ENCODE measurements at regions of chr3 and their contacts with region 1.

Region 1: GRCh38 chr3:179604321-179605078 is at the starts of genes MRPL47 and NDUFB5:
- DNase-seq: peak; percentile 96
- ATAC-seq: peak; percentile 95
- H3K4me3 Mint-ChIP-seq: peak within 1 kb of the TSS; percentile 99
- H3K27ac Mint-ChIP-seq: peak within 1 kb of the TSS; percentile 99
- H3K4me1 Mint-ChIP-seq: peaks cover 46% of the 10 kb centered on the region
- H3K27me3 Mint-ChIP-seq: no peaks in the 10 kb centered on the region
- total RNA-seq, gene MRPL47: 36.8 to 39.9 TPM
- total RNA-seq, gene NDUFB5: 87.1 to 95.9 TPM

Region 2: GRCh38 chr3:179503626-179504025 is 100.9 kb before region 1 on chr3:
- CTCF ChIA-PET with region 1: no interaction called
- POLR2A ChIA-PET with region 1: no interaction called
- DNase-seq: no peak
- ATAC-seq: no peak
- H3K4me3 Mint-ChIP-seq: no peak overlapping the region
- H3K27ac Mint-ChIP-seq: no peak overlapping the region
- H3K4me1 Mint-ChIP-seq: no peaks in the 10 kb centered on the region
- H3K27me3 Mint-ChIP-seq: peaks cover 13% of the 10 kb centered on the region

Region 3: GRCh38 chr3:179589143-179589542 is 15.4 kb before region 1 on chr3:
- CTCF ChIA-PET with region 1: no interaction called
- POLR2A ChIA-PET with region 1: no interaction called
- DNase-seq: no peak
- ATAC-seq: no peak
- H3K4me3 Mint-ChIP-seq: no peak overlapping the region
- H3K27ac Mint-ChIP-seq: no peak overlapping the region
- H3K4me1 Mint-ChIP-seq: no peaks in the 10 kb centered on the region
- H3K27me3 Mint-ChIP-seq: no peaks in the 10 kb centered on the region

Region 4: GRCh38 chr3:179653096-179653797 is 48.7 kb after region 1 on chr3:
- CTCF ChIA-PET with region 1: interaction called, 7 read pairs
- POLR2A ChIA-PET with region 1: interaction called, 16 read pairs
- DNase-seq: peak; percentile 68
- ATAC-seq: peak; percentile 76
- H3K4me3 Mint-ChIP-seq: peak overlapping the region; percentile 93
- H3K27ac Mint-ChIP-seq: peak overlapping the region; percentile 89
- H3K4me1 Mint-ChIP-seq: peaks cover 30% of the 10 kb centered on the region
- H3K27me3 Mint-ChIP-seq: peaks cover 10% of the 10 kb centered on the region